ENCODE measurements at regions of chr2 and their contacts with region 1.

Region 1: DNA sequence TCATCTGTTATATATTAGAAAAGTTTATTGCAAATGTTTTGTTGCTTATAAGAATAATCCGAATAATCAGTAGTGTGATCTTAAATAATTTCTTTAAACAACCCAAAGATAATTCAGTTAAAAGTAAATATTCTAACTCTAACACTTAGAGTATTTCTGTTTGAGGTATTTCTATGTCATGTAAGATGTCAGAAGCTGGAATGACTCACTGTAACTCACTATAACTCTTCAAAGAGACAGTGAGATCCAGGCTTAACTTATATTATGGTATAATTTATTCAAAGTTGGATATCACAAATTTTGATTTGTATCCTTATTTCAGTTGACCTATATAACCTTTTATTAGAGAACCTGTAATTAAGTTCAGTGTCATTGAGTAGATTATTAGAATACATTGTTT is 6.9 kb downstream of the MBD5 start:
- DNase-seq: peak; percentile 37
- ATAC-seq: peak; percentile 61
- H3K4me3 ChIP-seq: no peak overlapping the region
- H3K27ac ChIP-seq: no peak overlapping the region; the same call in 1 of the 2 replicates
- H3K4me1 ChIP-seq: peaks cover 2% of the 10 kb centered on the region; the same call in 1 of the 2 replicates
- H3K27me3 ChIP-seq: no peaks in the 10 kb centered on the region
- CTCF ChIP-seq: no peak
- POLR2A ChIP-seq: no peak
- RAD21 ChIP-seq: no peak

Region 2: DNA sequence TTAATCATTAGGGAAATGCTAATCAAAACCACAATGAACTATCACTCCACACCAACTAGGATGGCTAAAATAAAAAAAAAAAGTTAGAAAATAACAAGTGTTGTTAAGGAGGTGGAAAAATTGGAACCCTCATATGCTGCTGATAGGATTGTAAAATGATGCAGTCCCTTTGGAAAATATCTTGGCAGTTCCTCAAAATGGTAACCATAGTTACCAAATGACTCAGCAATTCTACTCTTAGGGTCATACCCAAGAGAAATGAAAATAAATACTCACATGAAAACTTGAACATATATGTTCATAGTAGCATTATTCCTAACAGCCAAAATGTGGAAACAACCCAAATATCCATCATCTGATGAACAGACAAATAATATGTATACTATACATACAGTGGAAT is 198.7 kb before region 1 on chr2:
- CTCF ChIA-PET with region 1: no interaction called
- POLR2A ChIA-PET with region 1: no interaction called
- dilution Hi-C with region 1: no loop called
- in situ Hi-C with region 1: no loop called
- intact Hi-C with region 1: no loop called
- DNase-seq: peak; percentile 88
- ATAC-seq: peak; percentile 81
- H3K4me3 ChIP-seq: no peak overlapping the region
- H3K27ac ChIP-seq: no peak overlapping the region
- H3K4me1 ChIP-seq: no peaks in the 10 kb centered on the region
- H3K27me3 ChIP-seq: no peaks in the 10 kb centered on the region
- CTCF ChIP-seq: no peak
- POLR2A ChIP-seq: no peak
- RAD21 ChIP-seq: no peak

Region 3: GRCh38 chr2:148058641-148059040 is 30.8 kb after region 1 on chr2:
- CTCF ChIA-PET with region 1: no interaction called
- POLR2A ChIA-PET with region 1: no interaction called
- dilution Hi-C with region 1: no loop called
- in situ Hi-C with region 1: no loop called
- intact Hi-C with region 1: loop called (anchors 1 kb)
- DNase-seq: peak; percentile 60
- ATAC-seq: peak; percentile 72
- H3K4me3 ChIP-seq: no peak overlapping the region
- H3K27ac ChIP-seq: no peak overlapping the region
- H3K4me1 ChIP-seq: no peaks in the 10 kb centered on the region
- H3K27me3 ChIP-seq: no peaks in the 10 kb centered on the region
- CTCF ChIP-seq: no peak
- POLR2A ChIP-seq: no peak
- RAD21 ChIP-seq: no peak

Region 4: DNA sequence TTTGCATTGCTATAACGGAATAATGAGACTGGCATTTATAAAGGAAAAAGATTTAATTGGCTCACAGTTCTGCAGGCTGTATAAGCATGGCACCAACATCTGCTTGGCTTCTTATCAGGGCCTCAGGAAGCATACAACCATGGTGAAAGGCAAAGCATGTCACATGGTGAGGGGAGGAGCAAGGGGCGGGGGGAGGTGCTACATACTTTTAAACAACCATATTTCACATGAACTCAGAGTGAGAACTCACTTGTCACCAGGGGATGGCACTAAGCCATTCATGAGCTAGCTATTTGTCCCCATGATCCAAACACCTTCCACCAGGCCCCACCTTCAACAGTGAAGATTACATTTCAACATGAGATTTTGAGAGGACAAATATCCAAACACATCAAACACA is 181.8 kb after region 1 on chr2:
- CTCF ChIA-PET with region 1: no interaction called
- POLR2A ChIA-PET with region 1: no interaction called
- dilution Hi-C with region 1: no loop called
- in situ Hi-C with region 1: no loop called
- intact Hi-C with region 1: no loop called
- DNase-seq: no peak
- ATAC-seq: 0 out of 2 replicates have a peak, but pooled peaks have one; percentile 21
- H3K4me3 ChIP-seq: no peak overlapping the region
- H3K27ac ChIP-seq: no peak overlapping the region
- H3K4me1 ChIP-seq: peaks cover 3% of the 10 kb centered on the region
- H3K27me3 ChIP-seq: no peaks in the 10 kb centered on the region
- CTCF ChIP-seq: no peak
- POLR2A ChIP-seq: no peak
- RAD21 ChIP-seq: no peak